WTC11 (cell line): ENCODE measurements at regions of chr13 and their contacts with region 1.

Region 1: GRCh38 chr13:51222037-51222685 is at the start of gene FAM124A:
- DNase-seq: peak; percentile 61
- ATAC-seq: peak; percentile 69
- H3K4me3 Mint-ChIP-seq: peak within 1 kb of the TSS; percentile 92
- H3K27ac Mint-ChIP-seq: peak within 1 kb of the TSS; percentile 68
- H3K4me1 Mint-ChIP-seq: peaks cover 57% of the 10 kb centered on the region
- H3K27me3 Mint-ChIP-seq: peaks cover 15% of the 10 kb centered on the region
- CTCF ChIP-seq: no peak; the same call in 1 of the 2 replicates
- total RNA-seq, gene FAM124A: 41.2 to 45.8 TPM (median 41.6 TPM) in 3 replicates

Region 2: GRCh38 chr13:50255639-50256038 is 966.5 kb before region 1 on chr13:
- CTCF ChIA-PET with region 1: no interaction called
- POLR2A ChIA-PET with region 1: no interaction called
- DNase-seq: no peak
- ATAC-seq: no peak
- H3K4me3 Mint-ChIP-seq: no peak overlapping the region
- H3K27ac Mint-ChIP-seq: no peak overlapping the region
- H3K4me1 Mint-ChIP-seq: peaks cover 12% of the 10 kb centered on the region
- H3K27me3 Mint-ChIP-seq: peaks cover 9% of the 10 kb centered on the region
- CTCF ChIP-seq: no peak

Region 3: GRCh38 chr13:51235756-51236490 is 13.8 kb after region 1 on chr13:
- CTCF ChIA-PET with region 1: interaction called, 15 read pairs
- POLR2A ChIA-PET with region 1: no interaction called
- DNase-seq: no peak
- ATAC-seq: peak; percentile 62
- H3K4me3 Mint-ChIP-seq: 0 out of 2 replicates have a peak overlapping the region, but pooled peaks have one; percentile 18
- H3K27ac Mint-ChIP-seq: peak overlapping the region; percentile 98
- H3K4me1 Mint-ChIP-seq: peaks cover 54% of the 10 kb centered on the region
- H3K27me3 Mint-ChIP-seq: no peaks in the 10 kb centered on the region
- CTCF ChIP-seq: no peak

Region 4: DNA sequence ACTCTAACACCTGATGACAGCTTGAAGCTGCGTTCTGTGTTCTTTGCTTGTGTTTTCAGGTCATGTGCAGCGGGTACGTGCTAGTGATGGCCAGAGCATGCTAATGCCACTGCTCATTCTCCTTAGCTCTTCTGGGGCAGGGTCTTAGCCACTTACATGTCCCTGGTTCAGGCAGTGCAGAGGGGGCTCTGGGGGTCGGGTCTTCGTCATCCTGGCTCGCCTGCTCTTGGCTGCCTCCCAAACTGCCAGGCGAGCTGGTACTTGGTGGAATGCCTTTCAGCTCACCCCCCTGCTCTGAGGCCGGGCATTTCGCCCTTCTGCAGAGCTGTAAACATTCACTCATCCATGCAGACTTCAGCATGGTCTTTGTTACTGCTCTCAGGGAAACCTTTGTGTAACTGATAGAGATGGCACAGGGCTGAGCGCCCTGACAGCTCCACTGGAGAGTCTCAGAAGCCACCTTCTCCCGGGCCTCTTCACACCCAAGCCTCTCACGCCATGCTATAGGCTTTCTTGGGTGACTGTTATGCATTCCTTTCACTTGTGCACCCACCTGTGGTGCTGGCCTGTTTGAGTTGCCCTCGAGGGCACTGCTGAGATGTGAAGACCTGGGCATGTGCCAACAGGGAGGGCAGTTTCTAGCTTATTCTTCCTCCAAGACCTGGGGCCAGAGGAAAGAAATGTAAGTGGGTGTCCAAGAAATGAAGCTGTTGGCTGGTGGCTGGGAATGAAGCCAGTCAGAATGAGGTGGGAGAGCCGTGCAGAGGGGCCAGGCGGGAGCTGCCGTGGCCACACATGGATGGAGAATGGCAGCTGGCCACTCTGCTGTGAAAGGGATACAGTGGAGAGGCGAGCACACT is 24.5 kb after region 1 on chr13:
- CTCF ChIA-PET with region 1: interaction called, 16 read pairs
- POLR2A ChIA-PET with region 1: interaction called, 5 read pairs
- DNase-seq: no peak
- ATAC-seq: no peak
- H3K4me3 Mint-ChIP-seq: no peak overlapping the region
- H3K27ac Mint-ChIP-seq: peak overlapping the region; percentile 46
- H3K4me1 Mint-ChIP-seq: no peaks in the 10 kb centered on the region; the same call in 1 of the 2 replicates
- H3K27me3 Mint-ChIP-seq: no peaks in the 10 kb centered on the region
- CTCF ChIP-seq: no peak

Region 5: GRCh38 chr13:51605698-51606097 is 383.5 kb after region 1 on chr13:
- CTCF ChIA-PET with region 1: no interaction called
- POLR2A ChIA-PET with region 1: no interaction called
- DNase-seq: no peak
- ATAC-seq: no peak
- H3K4me3 Mint-ChIP-seq: no peak overlapping the region
- H3K27ac Mint-ChIP-seq: no peak overlapping the region
- H3K4me1 Mint-ChIP-seq: peaks cover 46% of the 10 kb centered on the region
- H3K27me3 Mint-ChIP-seq: no peaks in the 10 kb centered on the region
- CTCF ChIP-seq: no peak

Region 6: GRCh38 chr13:51689663-51689996 is 467.5 kb after region 1 on chr13:
- CTCF ChIA-PET with region 1: no interaction called
- POLR2A ChIA-PET with region 1: no interaction called
- DNase-seq: no peak
- ATAC-seq: no peak
- H3K4me3 Mint-ChIP-seq: no peak overlapping the region
- H3K27ac Mint-ChIP-seq: no peak overlapping the region; the same call in 1 of the 2 replicates
- H3K4me1 Mint-ChIP-seq: peaks cover 21% of the 10 kb centered on the region
- H3K27me3 Mint-ChIP-seq: no peaks in the 10 kb centered on the region
- CTCF ChIP-seq: no peak